Esophagus muscularis mucosa (tissue), 4 donors: ENCODE measurements at regions of chr20 and their contacts with region 1.

Region 1: GRCh38 chr20:62494980-62495748 is 19.4 kb upstream of the GATA5 start:
- DNase-seq: no peak
- H3K4me3 ChIP-seq: no peak overlapping the region
- H3K27ac ChIP-seq: peak overlapping the region; percentile 65 to 86 (median 76)
- H3K4me1 ChIP-seq: peaks cover 36 to 48% (median 46%) of the 10 kb centered on the region in 4 donors
- H3K27me3 ChIP-seq: peaks cover 0 to 29% (median 0%) of the 10 kb centered on the region in 4 donors
- CTCF ChIP-seq: no peak
- EP300 ChIP-seq: no peak
- POLR2A ChIP-seq: no peak

Region 2: GRCh38 chr20:62409931-62410745 is 85.0 kb before region 1 on chr20:
- intact Hi-C with region 1: loop called (anchors 5 kb)
- DNase-seq: no peak
- H3K4me3 ChIP-seq: no peak overlapping the region
- H3K27ac ChIP-seq: peak overlapping the region in 2 of 4 donors; percentile 7 to 34
- H3K4me1 ChIP-seq: peaks cover 32 to 44% (median 39%) of the 10 kb centered on the region in 4 donors
- H3K27me3 ChIP-seq: peaks cover 0 to 8% (median 0%) of the 10 kb centered on the region in 4 donors
- CTCF ChIP-seq: peak; percentile 38 to 53 (median 52)
- EP300 ChIP-seq: no peak
- POLR2A ChIP-seq: no peak

Region 3: GRCh38 chr20:62427172-62428001 is 67.8 kb before region 1 on chr20 and contains the start of gene RBBP8NL:
- intact Hi-C with region 1: loop called (anchors 5 kb)
- DNase-seq: no peak
- H3K4me3 ChIP-seq: no peak within 1 kb of the TSS
- H3K27ac ChIP-seq: no peak within 1 kb of the TSS
- H3K4me1 ChIP-seq: no peaks in the 10 kb centered on the region
- H3K27me3 ChIP-seq: peaks cover 0 to 65% (median 3%) of the 10 kb centered on the region in 4 donors
- CTCF ChIP-seq: no peak
- EP300 ChIP-seq: no peak
- POLR2A ChIP-seq: no peak
- total RNA-seq, gene RBBP8NL: not detected

Region 4: GRCh38 chr20:62437927-62438326 is 57.2 kb before region 1 on chr20:
- intact Hi-C with region 1: no loop called
- DNase-seq: no peak
- H3K4me3 ChIP-seq: peak overlapping the region; percentile 13 to 25 (median 18)
- H3K27ac ChIP-seq: peak overlapping the region; percentile 58 to 77 (median 68)
- H3K4me1 ChIP-seq: peaks cover 10 to 41% (median 34%) of the 10 kb centered on the region in 4 donors
- H3K27me3 ChIP-seq: peaks cover 0 to 52% (median 0%) of the 10 kb centered on the region in 4 donors
- CTCF ChIP-seq: no peak
- EP300 ChIP-seq: no peak
- POLR2A ChIP-seq: no peak

Region 5: DNA sequence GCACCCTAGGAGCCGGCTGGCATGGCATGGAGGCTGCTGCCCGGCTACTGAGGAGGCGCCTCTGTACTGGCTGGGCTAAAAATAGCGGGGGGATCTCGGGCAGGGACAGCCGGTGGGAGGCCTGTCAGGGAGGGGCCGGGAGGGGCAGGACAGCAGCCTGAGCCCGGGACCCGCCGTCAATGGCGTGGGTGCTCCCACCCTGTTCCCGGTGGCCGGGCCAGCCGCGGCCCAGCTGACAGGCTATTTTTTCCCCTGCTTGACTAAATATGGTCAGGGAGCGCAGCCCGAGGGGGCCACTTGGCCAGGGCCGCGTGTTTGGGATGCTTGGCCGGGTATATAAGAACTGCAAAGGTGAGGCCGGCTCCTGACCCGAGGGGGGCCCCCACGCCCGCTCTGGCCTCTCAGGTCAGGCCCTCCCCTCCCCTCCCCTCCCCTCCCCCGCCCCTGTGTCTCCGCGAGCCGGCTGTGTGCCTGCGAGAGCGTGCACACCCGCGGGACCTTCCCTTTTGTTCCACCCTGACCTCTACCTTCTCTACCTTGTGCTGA is 55.0 kb after region 1 on chr20:
- intact Hi-C with region 1: no loop called
- DNase-seq: no peak
- H3K4me3 ChIP-seq: peak overlapping the region; percentile 69 to 84 (median 80)
- H3K27ac ChIP-seq: peak overlapping the region; percentile 86 to 92 (median 88)
- H3K4me1 ChIP-seq: peaks cover 32 to 80% (median 75%) of the 10 kb centered on the region in 4 donors
- H3K27me3 ChIP-seq: peaks cover 0 to 65% (median 7%) of the 10 kb centered on the region in 4 donors
- CTCF ChIP-seq: no peak
- EP300 ChIP-seq: peak; percentile 45
- POLR2A ChIP-seq: no peak

Region 6: DNA sequence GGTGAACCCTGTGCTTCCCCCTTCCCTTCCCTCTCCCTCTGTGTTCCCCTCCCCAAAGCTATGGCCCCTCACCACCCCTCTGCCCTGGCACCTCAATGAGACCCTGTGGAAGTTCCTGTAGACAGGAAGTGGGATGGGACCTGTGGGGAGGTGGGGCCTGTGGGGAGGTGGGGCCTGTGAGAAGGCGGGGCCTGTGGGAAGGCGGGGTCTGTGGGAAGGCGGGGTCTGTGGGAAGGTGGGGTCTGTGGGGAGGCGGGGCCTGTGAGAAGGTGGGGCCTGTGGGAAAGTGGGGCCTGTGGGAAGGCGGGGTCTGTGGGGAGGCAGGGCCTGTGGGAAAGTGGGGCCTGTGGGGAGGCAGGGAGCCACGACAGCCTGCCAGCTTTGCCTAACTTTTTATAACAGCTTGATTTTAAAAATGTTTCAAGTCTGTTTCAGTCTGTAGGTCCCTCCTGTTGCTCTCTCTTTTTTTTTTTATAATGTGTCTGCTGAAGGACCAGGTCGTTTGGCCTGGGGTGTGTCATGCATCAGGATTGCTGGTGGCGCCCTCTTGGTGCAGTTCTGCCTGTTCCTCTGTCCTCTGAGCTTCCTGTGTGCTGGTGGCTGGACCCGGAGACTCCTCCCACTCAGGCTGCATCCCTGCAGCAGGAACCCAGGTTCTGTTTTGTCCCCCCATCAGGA is 76.6 kb after region 1 on chr20:
- intact Hi-C with region 1: no loop called
- DNase-seq: no peak
- H3K4me3 ChIP-seq: no peak overlapping the region
- H3K27ac ChIP-seq: no peak overlapping the region
- H3K4me1 ChIP-seq: peaks cover 4 to 6% (median 5%) of the 10 kb centered on the region in 4 donors
- H3K27me3 ChIP-seq: peaks cover 0 to 20% (median 0%) of the 10 kb centered on the region in 4 donors
- CTCF ChIP-seq: no peak
- EP300 ChIP-seq: no peak
- POLR2A ChIP-seq: no peak

Region 7: GRCh38 chr20:62776692-62777527 is 281.7 kb after region 1 on chr20:
- intact Hi-C with region 1: no loop called
- DNase-seq: no peak
- H3K4me3 ChIP-seq: no peak overlapping the region
- H3K27ac ChIP-seq: no peak overlapping the region
- H3K4me1 ChIP-seq: peaks cover 2 to 15% (median 13%) of the 10 kb centered on the region in 4 donors
- H3K27me3 ChIP-seq: peaks cover 0 to 65% (median 0%) of the 10 kb centered on the region in 4 donors
- CTCF ChIP-seq: no peak
- EP300 ChIP-seq: no peak
- POLR2A ChIP-seq: no peak